CD4-positive, alpha-beta T cell (primary cell): ENCODE measurements at regions of chr14 and their contacts with region 1.

Region 1: GRCh38 chr14:35883677-35884293 is 57.6 kb downstream of the BRMS1L start:
- DNase-seq: peak in 5 of 14 experiments; percentile 9 to 38 (median 27)
- ATAC-seq: no peak
- H3K4me3 ChIP-seq: no peak overlapping the region
- H3K4me3 Mint-ChIP-seq: no peak overlapping the region
- H3K27ac ChIP-seq: no peak overlapping the region
- H3K27ac Mint-ChIP-seq: no peak overlapping the region
- H3K4me1 ChIP-seq: no peaks in the 10 kb centered on the region
- H3K4me1 Mint-ChIP-seq: no peaks in the 10 kb centered on the region
- H3K27me3 ChIP-seq: no peaks in the 10 kb centered on the region
- H3K27me3 Mint-ChIP-seq: no peaks in the 10 kb centered on the region
- CTCF ChIP-seq: peak; percentile 57

Region 2: GRCh38 chr14:35963209-35963608 is 79.4 kb after region 1 on chr14:
- CTCF ChIA-PET with region 1: no interaction called
- POLR2A ChIA-PET with region 1: no interaction called
- intact Hi-C with region 1: no loop called
- DNase-seq: no peak
- ATAC-seq: no peak
- H3K4me3 ChIP-seq: no peak overlapping the region
- H3K4me3 Mint-ChIP-seq: no peak overlapping the region
- H3K27ac ChIP-seq: no peak overlapping the region
- H3K27ac Mint-ChIP-seq: no peak overlapping the region
- H3K4me1 ChIP-seq: no peaks in the 10 kb centered on the region
- H3K4me1 Mint-ChIP-seq: no peaks in the 10 kb centered on the region
- H3K27me3 ChIP-seq: no peaks in the 10 kb centered on the region
- H3K27me3 Mint-ChIP-seq: no peaks in the 10 kb centered on the region
- CTCF ChIP-seq: no peak

Region 3: GRCh38 chr14:36070031-36070719 is 186.4 kb after region 1 on chr14:
- CTCF ChIA-PET with region 1: interaction called, 9 read pairs
- POLR2A ChIA-PET with region 1: no interaction called
- intact Hi-C with region 1: loop called in 1 of 2 experiments (anchors 2 kb)
- DNase-seq: peak in 6 of 14 experiments; percentile 2 to 13 (median 4)
- ATAC-seq: no peak
- H3K4me3 ChIP-seq: no peak overlapping the region
- H3K4me3 Mint-ChIP-seq: no peak overlapping the region
- H3K27ac ChIP-seq: no peak overlapping the region
- H3K27ac Mint-ChIP-seq: no peak overlapping the region
- H3K4me1 ChIP-seq: no peaks in the 10 kb centered on the region
- H3K4me1 Mint-ChIP-seq: peaks cover 6% of the 10 kb centered on the region
- H3K27me3 ChIP-seq: peaks cover 8 to 21% of the 10 kb centered on the region in 2 experiments
- H3K27me3 Mint-ChIP-seq: peaks cover 67% of the 10 kb centered on the region
- CTCF ChIP-seq: no peak

Region 4: DNA sequence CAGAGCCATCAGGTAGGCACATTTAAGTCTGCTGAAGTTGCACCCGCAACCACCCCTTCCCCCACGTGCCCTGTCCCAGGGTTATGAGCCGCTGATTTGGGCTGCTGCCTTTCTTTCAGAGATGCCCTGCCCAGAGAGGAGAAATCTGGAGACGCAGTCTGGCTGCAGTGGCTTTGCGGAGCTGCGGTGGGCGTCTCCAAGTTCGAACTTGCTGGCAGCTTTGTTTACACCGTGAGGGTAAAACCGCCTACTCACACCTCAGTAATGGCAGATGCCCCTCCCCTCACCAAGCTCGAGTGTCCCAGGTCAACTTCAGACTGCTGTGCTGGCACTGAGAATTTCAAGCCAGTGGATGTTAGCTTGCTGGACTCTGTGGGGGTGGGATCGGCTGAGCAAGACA is 278.0 kb after region 1 on chr14:
- CTCF ChIA-PET with region 1: no interaction called
- POLR2A ChIA-PET with region 1: no interaction called
- intact Hi-C with region 1: no loop called
- DNase-seq: peak in 1 of 14 experiments; percentile 3
- ATAC-seq: no peak
- H3K4me3 ChIP-seq: no peak overlapping the region
- H3K4me3 Mint-ChIP-seq: no peak overlapping the region
- H3K27ac ChIP-seq: no peak overlapping the region
- H3K27ac Mint-ChIP-seq: no peak overlapping the region
- H3K4me1 ChIP-seq: no peaks in the 10 kb centered on the region
- H3K4me1 Mint-ChIP-seq: no peaks in the 10 kb centered on the region
- H3K27me3 ChIP-seq: peaks cover 0 to 3% of the 10 kb centered on the region in 2 experiments
- H3K27me3 Mint-ChIP-seq: peaks cover 19% of the 10 kb centered on the region
- CTCF ChIP-seq: no peak

Region 5: GRCh38 chr14:36373982-36374673 is 490.3 kb after region 1 on chr14:
- CTCF ChIA-PET with region 1: interaction called, 8 read pairs
- POLR2A ChIA-PET with region 1: no interaction called
- intact Hi-C with region 1: loop called (anchors 1 to 2 kb)
- DNase-seq: peak; percentile 45 to 80 (median 60)
- ATAC-seq: peak; percentile 89
- H3K4me3 ChIP-seq: no peak overlapping the region
- H3K4me3 Mint-ChIP-seq: no peak overlapping the region
- H3K27ac ChIP-seq: no peak overlapping the region
- H3K27ac Mint-ChIP-seq: no peak overlapping the region
- H3K4me1 ChIP-seq: peaks cover 4% of the 10 kb centered on the region
- H3K4me1 Mint-ChIP-seq: no peaks in the 10 kb centered on the region
- H3K27me3 ChIP-seq: peaks cover 0 to 5% of the 10 kb centered on the region in 2 experiments
- H3K27me3 Mint-ChIP-seq: peaks cover 4% of the 10 kb centered on the region
- CTCF ChIP-seq: peak; percentile 85

Region 6: DNA sequence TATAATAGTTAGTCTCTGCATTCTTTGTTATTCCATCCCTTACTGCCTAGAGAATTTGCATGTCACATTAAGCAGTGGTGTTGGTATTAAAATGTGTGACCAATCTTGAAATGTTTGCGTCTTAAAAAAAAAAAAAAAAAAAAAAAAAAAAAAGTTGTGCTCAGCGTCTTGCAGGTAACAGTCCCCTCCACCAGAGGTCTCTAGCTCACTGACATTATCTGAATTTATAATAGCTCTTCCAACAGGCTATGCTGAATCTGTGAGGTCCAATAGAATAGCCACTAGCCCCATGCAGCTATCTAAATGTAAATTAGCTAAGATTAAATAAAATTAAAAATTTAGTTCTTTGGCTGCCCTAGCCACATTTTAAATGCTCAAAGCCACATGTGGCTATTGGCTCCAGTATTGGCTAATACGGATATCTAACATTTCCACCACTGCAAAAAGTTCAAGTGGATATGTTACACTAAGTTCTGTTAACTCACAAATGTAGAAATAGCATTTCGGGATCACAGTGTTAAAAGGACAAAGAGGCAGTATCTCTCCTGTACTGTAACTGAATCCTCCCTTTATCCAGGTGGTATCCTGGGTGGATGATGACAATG is 670.0 kb after region 1 on chr14:
- CTCF ChIA-PET with region 1: no interaction called
- POLR2A ChIA-PET with region 1: no interaction called
- intact Hi-C with region 1: loop called in 1 of 2 experiments (anchors 10 kb)
- DNase-seq: peak in 3 of 14 experiments; percentile 4 to 17 (median 11)
- ATAC-seq: no peak
- H3K4me3 ChIP-seq: no peak overlapping the region
- H3K4me3 Mint-ChIP-seq: no peak overlapping the region
- H3K27ac ChIP-seq: no peak overlapping the region
- H3K27ac Mint-ChIP-seq: no peak overlapping the region
- H3K4me1 ChIP-seq: no peaks in the 10 kb centered on the region
- H3K4me1 Mint-ChIP-seq: no peaks in the 10 kb centered on the region
- H3K27me3 ChIP-seq: peaks cover 3 to 6% of the 10 kb centered on the region in 2 experiments
- H3K27me3 Mint-ChIP-seq: peaks cover 19% of the 10 kb centered on the region
- CTCF ChIP-seq: peak; percentile 31

Region 7: GRCh38 chr14:36604757-36605505 is 721.1 kb after region 1 on chr14:
- CTCF ChIA-PET with region 1: no interaction called
- POLR2A ChIA-PET with region 1: no interaction called
- intact Hi-C with region 1: loop called (anchors 10 kb)
- DNase-seq: peak in 5 of 14 experiments; percentile 1 to 54 (median 40)
- ATAC-seq: no peak
- H3K4me3 ChIP-seq: no peak overlapping the region
- H3K4me3 Mint-ChIP-seq: no peak overlapping the region
- H3K27ac ChIP-seq: no peak overlapping the region
- H3K27ac Mint-ChIP-seq: no peak overlapping the region
- H3K4me1 ChIP-seq: no peaks in the 10 kb centered on the region
- H3K4me1 Mint-ChIP-seq: no peaks in the 10 kb centered on the region
- H3K27me3 ChIP-seq: peaks cover 0 to 5% of the 10 kb centered on the region in 2 experiments
- H3K27me3 Mint-ChIP-seq: peaks cover 43% of the 10 kb centered on the region
- CTCF ChIP-seq: peak; percentile 74

Region 8: GRCh38 chr14:36941783-36942521 is 1058.2 kb after region 1 on chr14:
- CTCF ChIA-PET with region 1: no interaction called
- POLR2A ChIA-PET with region 1: no interaction called
- intact Hi-C with region 1: loop called (anchors 5 to 10 kb)
- DNase-seq: peak; percentile 1 to 42 (median 16)
- ATAC-seq: no peak
- H3K4me3 ChIP-seq: no peak overlapping the region
- H3K4me3 Mint-ChIP-seq: no peak overlapping the region
- H3K27ac ChIP-seq: no peak overlapping the region
- H3K27ac Mint-ChIP-seq: no peak overlapping the region
- H3K4me1 ChIP-seq: no peaks in the 10 kb centered on the region
- H3K4me1 Mint-ChIP-seq: no peaks in the 10 kb centered on the region
- H3K27me3 ChIP-seq: no peaks in the 10 kb centered on the region
- H3K27me3 Mint-ChIP-seq: no peaks in the 10 kb centered on the region
- CTCF ChIP-seq: peak; percentile 86